Cardiac septum (tissue), 1 donor: ENCODE measurements at regions of chr10 and their contacts with region 1.

Region 1: DNA sequence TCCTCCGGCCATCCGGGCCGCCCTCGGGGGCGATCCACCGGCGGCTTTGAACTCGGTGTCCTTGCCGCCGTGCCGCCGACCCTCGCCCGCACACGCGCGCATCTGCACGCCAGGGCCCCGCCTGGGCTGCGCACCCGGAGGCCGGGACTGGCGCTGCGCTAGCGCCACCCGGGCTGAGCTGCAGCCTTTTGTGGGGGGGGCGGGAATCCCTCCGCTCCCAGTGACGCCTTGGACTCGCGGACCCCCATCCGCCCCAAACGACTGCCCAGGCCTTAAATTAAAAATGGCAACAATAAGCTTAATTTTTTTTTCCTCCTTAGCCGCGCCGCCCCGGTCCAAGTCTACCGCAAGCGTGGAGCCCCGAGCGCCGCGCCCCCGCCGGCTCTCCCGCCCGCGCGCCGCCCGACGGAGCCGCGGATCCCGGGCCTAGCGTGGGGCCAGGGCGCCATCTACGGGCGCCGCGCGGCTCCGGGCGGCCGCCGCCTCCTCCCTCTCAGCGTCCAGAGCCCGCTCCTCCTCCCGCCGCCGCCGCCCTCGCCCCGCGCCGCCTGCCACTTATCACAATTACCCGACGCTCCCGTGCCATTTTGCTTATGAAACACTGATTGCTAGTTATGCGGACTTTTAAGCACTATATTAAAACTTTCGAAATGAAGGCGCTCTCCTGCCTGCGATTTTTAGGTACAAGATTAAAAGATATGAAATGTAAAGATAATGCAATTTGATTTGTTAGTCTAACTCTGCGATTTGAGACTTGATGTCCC is 7.5 kb upstream of the EBF3 start:
- DNase-seq: no peak

Region 2: GRCh38 chr10:128631801-128632241 is 1339.7 kb before region 1 on chr10:
- intact Hi-C with region 1: loop called (anchors 5 kb)
- DNase-seq: no peak

Region 3: GRCh38 chr10:129531247-129531968 is 440.2 kb before region 1 on chr10:
- intact Hi-C with region 1: loop called (anchors 10 kb)
- DNase-seq: no peak

Region 4: GRCh38 chr10:129892548-129893052 is 79.0 kb before region 1 on chr10:
- intact Hi-C with region 1: loop called (anchors 5 kb)
- DNase-seq: no peak

Region 5: DNA sequence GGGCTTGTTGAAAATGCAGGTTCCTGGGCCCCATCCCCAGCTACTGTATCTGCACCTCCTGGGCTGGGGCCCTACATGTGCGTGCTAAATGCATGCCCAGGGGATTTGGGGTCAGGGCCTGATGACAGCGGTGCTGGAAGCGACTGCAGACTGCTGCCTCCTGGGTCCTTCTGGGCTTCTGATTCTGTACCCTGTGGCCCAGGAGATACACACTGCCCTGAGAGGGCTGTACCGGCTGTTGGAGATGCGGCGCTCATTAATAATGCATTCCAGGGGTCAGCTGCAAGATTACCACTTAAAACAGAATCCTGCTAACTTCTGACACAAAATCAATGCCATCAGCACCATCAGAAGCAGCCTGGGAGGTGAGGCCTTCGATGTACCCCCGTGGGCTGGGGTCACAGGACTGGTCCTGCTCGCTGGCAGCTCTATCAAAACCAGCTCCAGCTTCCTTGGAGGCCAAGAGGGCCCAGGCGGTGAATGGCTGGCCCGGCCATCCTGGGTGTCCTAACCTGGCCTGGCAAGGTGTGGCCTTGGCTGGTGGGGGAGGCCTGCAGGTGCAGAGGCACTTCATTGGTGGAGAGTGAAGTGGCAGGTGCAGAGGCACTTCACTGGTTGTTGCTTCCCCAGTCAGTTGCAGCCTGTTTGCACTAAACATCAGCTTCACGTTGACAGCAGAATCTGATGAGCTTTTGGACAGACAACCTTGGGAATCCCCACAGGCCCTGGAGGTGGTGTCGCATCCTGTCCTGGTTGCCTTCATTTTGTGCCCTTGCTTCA is 243.8 kb after region 1 on chr10:
- intact Hi-C with region 1: no loop called
- DNase-seq: peak; percentile 69

Region 6: DNA sequence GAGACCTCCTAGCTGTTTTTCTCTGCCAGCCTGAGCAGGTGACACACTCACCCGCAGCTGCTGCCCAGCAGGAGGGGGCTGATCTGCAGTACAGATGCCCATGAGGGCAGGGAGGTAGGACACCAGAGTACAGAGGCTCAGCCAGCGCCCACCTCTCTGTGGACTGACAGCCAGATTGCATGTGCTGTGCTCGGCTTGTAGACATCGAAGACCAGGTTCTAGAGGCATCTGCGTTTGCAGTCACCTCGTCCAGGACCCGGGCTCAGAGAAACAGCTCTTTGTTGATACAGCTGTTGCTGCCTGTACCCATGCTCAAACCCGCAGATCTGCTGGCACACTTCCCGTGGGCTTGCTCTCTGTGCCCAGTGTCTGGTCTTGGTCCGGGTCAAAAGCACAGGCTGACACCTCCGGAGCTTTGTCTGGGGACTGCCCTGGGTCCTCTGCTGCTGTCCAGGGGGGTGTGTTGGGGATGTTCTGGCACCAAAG is 389.3 kb after region 1 on chr10:
- intact Hi-C with region 1: no loop called
- DNase-seq: peak; percentile 75